ENCODE measurements at regions of chrX and their contacts with region 1.

Region 1: DNA sequence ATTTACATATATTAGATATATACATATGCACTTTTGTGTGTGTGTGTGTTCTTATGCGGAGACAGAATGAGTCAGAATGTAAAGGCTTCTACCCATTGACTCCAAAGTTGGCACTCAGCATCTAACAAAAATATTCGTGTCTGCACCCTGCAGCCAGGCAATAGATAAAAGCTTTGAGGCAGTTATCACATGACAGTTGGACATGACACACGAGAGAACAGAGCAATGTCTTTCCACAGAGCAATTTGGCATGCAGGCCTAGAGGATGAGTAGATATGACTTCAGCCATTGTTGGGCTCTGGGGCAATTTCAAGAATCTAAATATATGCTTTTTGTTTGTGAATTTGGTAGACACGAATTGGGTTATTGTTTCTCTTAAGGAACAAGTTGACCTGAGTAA is 391.2 kb downstream of the SLITRK2 start:
- DNase-seq: no peak
- H3K4me3 Mint-ChIP-seq: no peak overlapping the region
- H3K27ac Mint-ChIP-seq: no peak overlapping the region
- H3K4me1 Mint-ChIP-seq: no peaks in the 10 kb centered on the region
- H3K27me3 Mint-ChIP-seq: no peaks in the 10 kb centered on the region

Region 2: GRCh38 chrX:145813081-145813480 is 395.7 kb before region 1 on chrX:
- CTCF ChIA-PET with region 1: no interaction called
- POLR2A ChIA-PET with region 1: interaction called, 10 read pairs
- DNase-seq: no peak
- H3K4me3 Mint-ChIP-seq: no peak overlapping the region
- H3K27ac Mint-ChIP-seq: no peak overlapping the region
- H3K4me1 Mint-ChIP-seq: no peaks in the 10 kb centered on the region
- H3K27me3 Mint-ChIP-seq: peaks cover 11% of the 10 kb centered on the region

Region 3: DNA sequence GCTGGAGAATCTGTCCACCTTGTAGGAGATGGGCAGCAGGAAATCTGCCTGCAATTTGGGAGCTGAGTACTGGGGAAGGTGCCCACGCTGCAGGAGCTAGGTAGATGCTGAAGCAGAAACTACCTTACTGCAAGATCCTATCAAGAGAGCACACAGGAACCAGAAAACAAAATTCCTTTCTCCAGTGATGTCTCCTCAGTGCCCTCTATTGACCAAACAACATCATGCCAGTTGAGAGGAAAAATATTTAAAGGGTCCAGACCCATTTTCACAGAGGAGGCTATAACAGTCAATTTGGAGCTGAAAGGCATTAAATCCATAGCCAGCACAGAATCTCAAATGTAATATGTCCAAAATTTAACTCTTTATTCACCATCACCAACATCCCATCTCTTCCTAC is 15.6 kb after region 1 on chrX:
- CTCF ChIA-PET with region 1: no interaction called
- POLR2A ChIA-PET with region 1: no interaction called
- DNase-seq: no peak
- H3K4me3 Mint-ChIP-seq: no peak overlapping the region
- H3K27ac Mint-ChIP-seq: no peak overlapping the region
- H3K4me1 Mint-ChIP-seq: no peaks in the 10 kb centered on the region
- H3K27me3 Mint-ChIP-seq: no peaks in the 10 kb centered on the region

Measured in activated CD4-positive, alpha-beta T cell treated with anti-CD3 and anti-CD28 coated beads, Interleukin-2, amount 10 ng/mL, durations not matched to agents 7 days and 5 days (primary cell).